ENCODE measurements at regions of chr15 and their contacts with region 1.

Region 1: DNA sequence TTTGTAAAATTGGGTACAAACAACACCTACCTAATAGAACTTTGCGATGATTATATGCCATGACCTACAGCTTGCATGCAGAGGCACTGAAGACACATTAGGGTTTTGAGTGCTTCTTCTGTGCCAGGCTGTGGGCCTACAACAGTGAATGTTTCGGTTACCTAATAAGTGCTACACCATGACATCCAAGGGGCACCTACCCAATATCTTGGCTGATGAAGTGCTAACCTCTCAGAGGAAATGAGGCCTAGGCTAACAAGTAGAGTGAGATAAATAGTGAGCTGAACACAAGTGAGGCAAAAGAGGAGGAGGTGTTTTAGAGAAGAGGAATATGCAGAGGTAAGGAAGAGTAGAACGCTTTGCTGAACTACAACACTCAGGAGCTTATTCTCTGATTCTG is 12.2 kb upstream of the RASGRP1 start:
- DNase-seq: no peak

Region 2: DNA sequence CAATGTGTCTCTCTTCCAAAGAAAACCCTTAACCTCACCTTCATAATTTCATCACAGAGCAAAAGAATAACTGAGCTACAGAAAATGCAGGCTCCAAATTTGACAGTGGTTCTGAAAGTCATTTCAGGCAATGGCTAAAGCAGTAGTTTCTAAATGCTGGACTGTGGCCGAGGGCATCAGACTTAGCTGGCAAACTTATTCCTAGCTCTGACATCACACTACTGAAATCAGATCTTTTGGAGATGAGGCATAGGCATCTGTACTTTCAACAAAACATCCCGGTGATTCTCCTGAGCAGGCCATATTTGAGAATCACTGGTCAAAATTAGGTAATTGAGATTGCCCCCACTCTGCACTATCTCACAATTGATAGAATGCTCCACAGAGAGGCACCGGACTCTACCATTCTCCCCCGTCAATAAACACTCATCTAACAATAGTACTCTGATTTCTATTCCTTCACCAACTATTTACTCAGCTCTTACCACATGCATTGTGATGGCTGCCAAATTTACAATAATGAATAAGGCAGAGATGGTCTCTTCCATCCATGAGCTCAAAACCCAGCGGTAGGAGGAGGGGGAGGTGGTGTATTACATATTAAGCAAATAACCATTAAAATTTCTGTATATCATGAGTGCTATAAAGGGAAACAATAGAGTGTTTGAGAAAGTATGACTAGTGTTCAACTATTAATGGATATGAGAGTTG is 381.5 kb before region 1 on chr15:
- intact Hi-C with region 1: loop called (anchors 5 kb)
- DNase-seq: no peak

Region 3: DNA sequence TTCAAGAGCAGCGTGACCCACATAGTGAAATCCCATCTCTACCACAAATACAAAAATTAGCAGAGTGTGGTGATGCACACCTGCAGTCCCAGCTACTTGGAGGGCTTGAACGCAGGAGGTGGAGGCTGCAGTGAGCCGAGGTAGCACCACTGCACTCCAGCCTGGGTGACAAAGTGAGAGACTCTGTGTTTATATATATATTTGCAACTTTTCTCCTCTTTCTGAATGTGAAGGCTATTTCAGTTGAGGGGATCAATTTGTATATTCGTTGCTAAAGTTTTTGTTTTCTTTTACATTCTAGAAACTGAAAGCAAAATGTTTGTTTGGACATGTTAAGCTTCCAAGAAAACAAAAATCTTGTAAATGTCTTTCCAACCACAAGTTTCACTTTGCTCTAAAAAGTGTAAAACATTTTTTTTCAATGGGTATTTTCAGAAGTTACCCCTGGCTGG is 152.7 kb before region 1 on chr15:
- intact Hi-C with region 1: no loop called
- DNase-seq: no peak

Region 4: GRCh38 chr15:38879909-38880471 is 303.2 kb after region 1 on chr15:
- intact Hi-C with region 1: no loop called
- DNase-seq: no peak

Measured in cardiac septum (tissue), 1 donor.